Right ventricle myocardium inferior (tissue), 1 donor: ENCODE measurements at regions of chr9 and their contacts with region 1.

Region 1: GRCh38 chr9:14652729-14653377 is 40.4 kb downstream of the ZDHHC21 start:
- DNase-seq: no peak
- ATAC-seq: no peak

Region 2: GRCh38 chr9:14466429-14466818 is 186.4 kb before region 1 on chr9:
- intact Hi-C with region 1: loop called (anchors 2 kb)
- DNase-seq: no peak
- ATAC-seq: no peak

Region 3: GRCh38 chr9:14797435-14797834 is 144.6 kb after region 1 on chr9:
- intact Hi-C with region 1: no loop called
- DNase-seq: no peak
- ATAC-seq: no peak